Activated naive CD4-positive, alpha-beta T cell treated with anti-CD3 and anti-CD28 coated beads for 36 hours (primary cell): ENCODE measurements at regions of chr17 and their contacts with region 1.

Region 1: GRCh38 chr17:65122836-65123756 is 14.1 kb upstream of the RGS9 start:
- DNase-seq: peak; percentile 90
- H3K4me3 Mint-ChIP-seq: peak overlapping the region; percentile 78
- H3K27ac Mint-ChIP-seq: peak overlapping the region; percentile 91
- H3K4me1 Mint-ChIP-seq: peaks cover 25% of the 10 kb centered on the region
- H3K27me3 Mint-ChIP-seq: peaks cover 5% of the 10 kb centered on the region

Region 2: DNA sequence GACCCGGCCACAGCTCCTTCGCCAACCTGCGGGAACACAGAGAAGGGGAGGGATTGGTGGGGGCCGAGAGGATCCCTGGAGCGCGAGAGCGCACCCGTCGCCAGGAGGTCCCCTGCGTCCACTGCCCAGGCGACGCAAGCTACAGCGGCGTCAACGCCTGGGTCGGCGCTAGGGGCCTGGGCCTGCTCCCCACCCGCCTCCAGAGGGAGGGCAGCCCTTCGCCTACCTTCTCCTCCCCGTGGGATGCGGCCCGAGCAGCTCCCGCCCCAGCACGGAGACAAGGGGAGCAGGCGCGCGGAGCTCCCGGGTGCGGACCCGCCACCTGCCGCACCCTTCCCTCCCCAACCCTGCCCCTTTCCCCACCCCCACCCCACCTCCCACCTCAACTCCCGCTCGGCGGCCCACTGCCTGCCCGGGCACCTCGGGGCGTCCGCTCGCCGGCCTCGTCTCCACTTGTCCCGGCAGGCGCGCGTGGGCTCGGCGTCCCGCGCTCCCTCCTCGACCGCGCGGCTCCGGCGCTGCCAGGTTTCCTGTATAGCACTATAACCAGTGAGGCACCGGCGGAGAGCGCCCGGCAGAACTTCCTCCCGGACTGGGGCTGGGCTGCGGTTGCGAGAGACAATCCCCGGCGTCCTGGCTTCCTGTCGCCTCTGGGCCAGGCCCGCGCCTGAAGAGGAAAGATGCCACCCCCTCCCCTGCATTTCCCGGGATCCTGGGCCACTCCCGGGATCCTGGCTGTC is 341.9 kb before region 1 on chr17:
- CTCF ChIA-PET with region 1: no interaction called
- intact Hi-C with region 1: loop called (anchors 5 kb)
- DNase-seq: peak; percentile 78
- H3K4me3 Mint-ChIP-seq: peak overlapping the region; percentile 70
- H3K27ac Mint-ChIP-seq: no peak overlapping the region
- H3K4me1 Mint-ChIP-seq: peaks cover 41% of the 10 kb centered on the region
- H3K27me3 Mint-ChIP-seq: peaks cover 9% of the 10 kb centered on the region

Region 3: DNA sequence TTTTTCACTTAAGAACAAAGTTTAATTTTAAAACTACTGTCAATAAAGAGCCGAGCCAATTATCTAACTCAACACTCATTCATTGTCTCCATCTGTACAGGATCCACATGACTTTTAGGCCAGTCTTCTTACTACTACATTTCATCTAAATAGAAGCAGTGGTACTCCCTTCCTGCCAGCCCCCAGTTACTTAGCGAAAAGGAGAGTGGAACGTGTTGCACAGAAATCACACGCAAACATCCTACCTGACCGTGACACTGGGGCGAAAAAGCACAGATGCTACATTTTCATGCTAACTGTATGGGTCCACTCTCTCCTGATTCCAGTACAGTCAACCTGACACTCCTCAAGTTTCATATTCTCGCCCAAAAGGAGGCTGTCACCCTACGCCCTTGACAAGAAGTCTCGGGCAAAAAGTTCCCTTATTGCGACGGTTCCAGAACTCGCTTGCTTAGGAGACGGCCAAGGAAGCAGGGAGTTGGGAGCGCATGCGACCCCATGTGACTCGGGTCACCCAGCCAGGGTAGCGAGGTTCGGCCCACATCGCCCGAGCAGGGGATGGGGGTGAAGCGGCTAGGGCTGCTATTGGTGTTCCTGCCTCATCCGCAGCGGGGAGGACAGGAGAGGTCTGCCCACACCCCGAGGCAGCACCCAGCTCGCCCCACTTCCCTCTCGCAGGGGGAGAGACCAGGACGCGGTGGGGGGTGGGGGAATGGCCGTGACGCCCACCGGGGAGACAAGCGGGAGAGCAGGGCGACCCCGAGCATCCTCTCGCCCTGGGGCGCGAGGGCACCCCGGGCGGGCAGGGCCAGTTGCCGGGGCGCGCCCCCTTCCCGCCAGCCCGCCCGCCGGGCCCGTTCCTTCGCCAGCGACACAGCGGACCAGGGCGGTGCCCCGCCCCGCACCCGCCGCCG is 67.5 kb before region 1 on chr17:
- CTCF ChIA-PET with region 1: no interaction called
- intact Hi-C with region 1: loop called (anchors 2 kb)
- DNase-seq: peak; percentile 55
- H3K4me3 Mint-ChIP-seq: peak overlapping the region; percentile 98
- H3K27ac Mint-ChIP-seq: peak overlapping the region; percentile 94
- H3K4me1 Mint-ChIP-seq: peaks cover 43% of the 10 kb centered on the region
- H3K27me3 Mint-ChIP-seq: no peaks in the 10 kb centered on the region

Region 4: GRCh38 chr17:65163990-65164495 is 40.9 kb after region 1 on chr17:
- CTCF ChIA-PET with region 1: no interaction called
- intact Hi-C with region 1: loop called (anchors 2 kb)
- DNase-seq: peak; percentile 85
- H3K4me3 Mint-ChIP-seq: no peak overlapping the region
- H3K27ac Mint-ChIP-seq: peak overlapping the region; percentile 11
- H3K4me1 Mint-ChIP-seq: peaks cover 12% of the 10 kb centered on the region
- H3K27me3 Mint-ChIP-seq: no peaks in the 10 kb centered on the region

Region 5: GRCh38 chr17:65198653-65199382 is 75.7 kb after region 1 on chr17:
- CTCF ChIA-PET with region 1: no interaction called
- intact Hi-C with region 1: loop called (anchors 5 kb)
- DNase-seq: no peak
- H3K4me3 Mint-ChIP-seq: no peak overlapping the region
- H3K27ac Mint-ChIP-seq: no peak overlapping the region
- H3K4me1 Mint-ChIP-seq: peaks cover 8% of the 10 kb centered on the region
- H3K27me3 Mint-ChIP-seq: no peaks in the 10 kb centered on the region

Region 6: GRCh38 chr17:66466840-66467367 is 1343.8 kb after region 1 on chr17:
- CTCF ChIA-PET with region 1: no interaction called
- intact Hi-C with region 1: loop called (anchors 5 kb)
- DNase-seq: peak; percentile 87
- H3K4me3 Mint-ChIP-seq: peak overlapping the region; percentile 45
- H3K27ac Mint-ChIP-seq: peak overlapping the region; percentile 90
- H3K4me1 Mint-ChIP-seq: peaks cover 75% of the 10 kb centered on the region
- H3K27me3 Mint-ChIP-seq: no peaks in the 10 kb centered on the region